ENCODE measurements at regions of chr6 and their contacts with region 1.

Region 1: GRCh38 chr6:25223490-25223991 is 55.6 kb upstream of the CARMIL1 start:
- DNase-seq: peak; percentile 70
- ATAC-seq: peak; percentile 67

Region 2: DNA sequence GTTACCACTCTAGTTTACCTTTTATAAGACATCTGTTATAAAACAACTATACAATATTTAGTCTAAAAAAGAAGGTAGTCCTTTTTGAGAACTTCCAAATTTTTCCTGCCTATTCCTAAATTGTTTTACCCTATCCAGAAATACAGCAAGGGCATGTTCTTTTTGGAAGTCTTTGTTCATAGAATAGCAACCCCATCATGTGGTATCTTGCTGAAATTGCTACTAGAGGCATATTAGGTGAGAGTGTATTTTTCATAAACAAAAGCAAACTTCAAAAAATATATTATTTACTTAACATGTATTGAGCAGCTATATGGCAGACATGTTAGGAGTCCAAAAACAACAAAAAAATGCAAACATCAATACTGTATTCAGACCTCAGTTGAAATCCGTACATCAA is 1469.3 kb before region 1 on chr6:
- intact Hi-C with region 1: no loop called
- DNase-seq: no peak
- ATAC-seq: no peak

Region 3: GRCh38 chr6:24734166-24734565 is 489.4 kb before region 1 on chr6:
- intact Hi-C with region 1: no loop called
- DNase-seq: no peak
- ATAC-seq: no peak

Region 4: DNA sequence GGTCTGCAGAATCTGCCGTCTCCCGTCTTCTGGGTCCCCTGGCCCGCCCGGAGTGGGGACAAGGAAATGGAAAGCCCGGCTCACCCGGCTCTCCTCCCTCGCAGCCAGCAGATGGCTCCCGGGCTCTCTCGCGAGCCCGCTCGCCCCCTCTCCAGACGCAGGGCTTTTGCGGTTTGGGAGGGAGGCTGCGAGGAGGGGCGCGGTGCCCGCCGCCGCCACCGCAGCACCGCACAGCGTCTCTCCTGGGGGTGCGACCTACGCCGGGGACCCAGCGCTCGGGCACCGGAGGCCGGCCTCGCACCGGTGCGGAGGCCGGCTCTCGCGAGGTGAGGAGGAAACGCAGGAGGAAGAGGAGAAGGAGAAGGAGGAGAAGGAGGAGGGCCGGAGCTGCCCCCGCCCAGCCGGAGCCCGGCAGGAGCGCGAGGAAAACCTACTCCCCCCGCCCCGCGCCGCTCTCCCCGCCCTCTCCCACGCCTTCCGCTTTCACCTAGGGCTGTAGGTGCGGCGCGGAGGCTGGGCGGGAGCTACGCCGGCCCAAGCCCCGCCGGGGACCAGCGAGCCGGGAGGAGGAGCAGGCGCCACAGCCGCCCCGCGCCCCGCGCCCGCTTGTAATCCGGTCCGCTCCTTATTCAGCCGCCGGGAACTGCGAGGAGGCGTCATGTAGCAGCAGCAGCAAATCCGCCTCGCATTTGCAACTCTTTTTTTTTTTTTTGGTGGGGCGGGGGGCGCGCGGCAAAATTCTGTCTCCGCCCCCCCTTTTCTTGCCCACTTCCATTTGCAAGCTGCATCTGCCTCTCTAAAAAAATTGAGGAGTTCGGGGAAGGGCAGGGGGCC is 55.6 kb after region 1 on chr6 and contains the start of gene CARMIL1:
- intact Hi-C with region 1: loop called (anchors 5 kb)
- DNase-seq: peak; percentile 90
- ATAC-seq: peak; percentile 95
- total RNA-seq, gene CARMIL1: 5.4 TPM

Region 5: DNA sequence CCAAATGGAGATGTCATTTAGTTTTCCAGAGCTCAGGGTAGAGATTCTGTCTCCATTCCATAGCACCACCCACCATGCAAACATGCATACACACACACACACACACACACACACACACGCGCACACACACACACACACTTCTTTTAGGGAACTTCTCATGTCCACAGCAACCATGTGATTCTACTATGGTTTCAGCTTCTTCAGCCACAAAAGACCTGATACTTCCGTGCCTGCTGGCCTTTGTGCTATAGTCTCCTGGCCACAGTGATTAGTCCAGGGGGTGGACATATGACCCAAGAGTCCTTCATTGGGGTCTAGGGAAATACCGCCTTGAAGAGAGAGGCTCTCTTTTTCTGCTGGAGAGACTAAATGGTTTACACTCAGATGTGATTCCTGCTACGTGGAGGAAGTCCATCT is 109.1 kb after region 1 on chr6:
- intact Hi-C with region 1: no loop called
- DNase-seq: no peak
- ATAC-seq: no peak

Region 6: GRCh38 chr6:25556516-25556915 is 333.0 kb after region 1 on chr6:
- intact Hi-C with region 1: loop called (anchors 5 kb)
- DNase-seq: peak; percentile 85
- ATAC-seq: no peak

Region 7: GRCh38 chr6:25601800-25602673 is 378.5 kb after region 1 on chr6:
- intact Hi-C with region 1: loop called (anchors 5 kb)
- DNase-seq: no peak
- ATAC-seq: no peak

Region 8: DNA sequence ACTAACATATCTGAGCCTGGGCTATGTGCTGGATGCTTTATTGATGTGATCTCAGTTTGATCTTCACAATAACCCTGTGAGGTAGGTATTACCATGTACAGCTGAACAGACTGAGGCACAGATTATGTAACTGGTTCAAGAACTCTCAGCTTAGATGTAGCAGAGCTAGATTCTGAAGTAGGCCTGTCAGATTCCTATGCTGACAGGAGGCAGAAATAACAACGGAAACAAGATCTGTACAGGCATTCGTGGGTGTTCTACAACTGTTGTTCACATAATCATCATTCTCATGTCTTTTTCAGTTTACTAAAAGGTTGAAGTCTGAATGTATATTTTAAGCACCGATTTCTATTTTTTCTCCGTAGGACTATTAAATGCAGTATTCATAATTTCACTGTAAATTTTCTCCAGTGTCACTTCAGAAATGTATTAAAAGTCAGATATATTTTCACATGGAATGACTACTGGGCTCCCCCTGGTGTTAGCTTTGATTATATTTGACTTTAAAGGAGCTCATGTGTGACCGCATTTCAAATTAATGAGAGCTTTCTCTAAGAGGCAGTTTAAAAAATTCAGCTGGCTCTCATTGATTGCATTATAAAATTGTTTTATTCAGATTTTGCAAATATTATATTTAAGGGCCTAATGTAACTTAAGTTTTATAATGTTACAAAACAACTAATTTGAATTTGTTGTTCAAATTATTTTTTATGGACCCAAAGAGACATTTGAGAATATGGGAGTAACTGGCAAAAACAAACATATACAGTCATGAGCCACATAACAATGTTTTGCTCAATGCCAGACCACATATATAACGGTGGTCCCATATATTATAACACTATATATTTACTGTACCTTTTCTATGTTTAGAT is 494.6 kb after region 1 on chr6:
- intact Hi-C with region 1: loop called (anchors 10 kb)
- DNase-seq: no peak
- ATAC-seq: no peak

Measured in Right ventricle myocardium inferior (tissue), 1 donor.